ENCODE measurements at regions of chr1 and their contacts with region 1.

Region 1: DNA sequence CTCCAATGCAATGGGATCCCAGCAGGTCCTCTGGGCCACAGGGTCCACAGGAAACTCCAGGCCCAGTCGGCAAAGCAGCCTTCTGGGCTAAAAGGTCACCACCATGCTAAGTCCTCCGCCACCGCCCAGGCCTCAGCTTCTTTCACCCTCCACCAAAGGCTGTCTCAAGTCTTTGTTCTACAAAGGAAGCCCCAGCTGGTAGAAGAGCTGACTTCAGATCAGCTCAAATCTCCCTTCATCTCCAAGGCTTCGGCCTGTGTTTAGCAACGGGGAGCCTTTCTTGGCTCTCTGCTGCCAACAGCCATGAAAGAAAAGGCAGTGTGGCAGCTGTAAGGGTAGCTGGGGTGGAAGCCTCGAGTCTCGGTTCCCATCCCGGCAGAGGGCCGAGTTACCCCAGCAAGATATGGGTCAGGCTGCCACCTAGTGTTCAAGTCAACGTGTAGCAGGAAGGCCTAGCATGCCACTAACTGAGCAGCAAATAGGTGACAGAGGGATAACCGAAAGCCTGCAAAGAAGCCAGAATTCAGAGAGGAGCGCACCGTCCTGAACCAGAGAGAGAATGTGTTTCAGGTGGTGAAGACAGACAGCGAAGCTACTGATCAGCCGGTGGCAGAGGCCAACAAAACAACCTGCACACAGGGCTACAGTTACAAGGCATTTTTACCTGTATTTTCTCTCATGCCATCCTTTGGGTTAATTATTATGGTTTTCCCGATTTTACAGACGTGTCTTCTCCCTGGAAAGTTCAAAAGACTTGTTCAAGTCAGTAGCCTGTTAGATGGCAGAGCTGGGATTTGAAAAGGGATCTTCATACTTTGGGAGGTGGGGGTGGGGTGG is 26.8 kb upstream of the CRNN start:
- DNase-seq: no peak

Region 2: DNA sequence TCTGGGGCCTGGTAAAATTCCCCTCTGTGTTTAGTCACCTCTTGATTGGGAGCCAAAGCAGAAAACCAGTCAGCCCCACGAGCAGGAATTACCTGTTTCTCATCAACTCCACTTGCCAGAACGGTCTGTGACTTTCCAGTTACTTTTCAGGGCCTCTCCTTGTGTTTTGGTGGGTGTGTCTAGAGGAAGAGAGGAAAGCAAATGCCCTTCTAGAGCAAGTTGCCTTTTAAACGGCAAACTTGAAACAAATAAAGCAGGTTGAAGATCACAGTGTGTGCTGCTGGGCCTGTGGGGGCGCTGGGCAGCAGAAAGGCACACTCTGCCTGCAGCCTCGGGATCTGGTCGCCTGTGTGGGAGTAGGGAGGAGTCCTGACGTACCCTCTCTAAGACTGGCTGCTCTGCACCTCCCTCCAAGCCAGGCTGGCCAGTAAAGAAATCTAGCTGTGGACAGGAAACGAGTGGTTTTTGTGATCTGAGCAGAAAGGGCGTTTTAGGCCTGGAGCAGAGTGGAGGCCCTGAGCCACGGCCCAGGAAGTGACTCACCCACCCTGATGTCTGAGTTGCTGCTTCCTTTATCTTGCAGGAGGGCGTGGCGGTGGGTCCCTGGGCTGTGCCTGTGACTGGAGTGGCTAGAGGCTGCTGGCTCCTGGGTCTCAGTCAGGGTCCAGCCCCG is 393.0 kb before region 1 on chr1:
- intact Hi-C with region 1: loop called (anchors 5 kb)
- DNase-seq: peak; percentile 96

Region 3: GRCh38 chr1:152141974-152142584 is 298.8 kb before region 1 on chr1:
- intact Hi-C with region 1: loop called (anchors 5 kb)
- DNase-seq: no peak

Region 4: GRCh38 chr1:152347116-152347728 is 93.6 kb before region 1 on chr1:
- intact Hi-C with region 1: loop called (anchors 5 kb)
- DNase-seq: no peak

Measured in cardiac septum (tissue), 1 donor.